ENCODE measurements at regions of chr7 and their contacts with region 1.

Region 1: GRCh38 chr7:132569884-132570614 is 6.2 kb downstream of the PLXNA4 start:
- DNase-seq: no peak
- ATAC-seq: no peak
- H3K4me3 ChIP-seq: no peak overlapping the region
- H3K27ac ChIP-seq: no peak overlapping the region
- H3K4me1 ChIP-seq: peaks cover 0 to 24% (median 2%) of the 10 kb centered on the region in 12 donors
- H3K27me3 ChIP-seq: peaks cover 0 to 43% (median 4%) of the 10 kb centered on the region in 9 donors
- CTCF ChIP-seq: no peak
- POLR2A ChIP-seq: no peak

Region 2: GRCh38 chr7:132500727-132501440 is 69.2 kb before region 1 on chr7:
- intact Hi-C with region 1: loop called in 3 of 10 experiments (anchors 5 to 10 kb)
- DNase-seq: peak in 4 of 5 donors; percentile 64 to 82 (median 73)
- ATAC-seq: peak; percentile 81 to 92 (median 85)
- H3K4me3 ChIP-seq: no peak overlapping the region
- H3K27ac ChIP-seq: peak overlapping the region in 3 of 12 donors; percentile 0 to 37 (median 34)
- H3K4me1 ChIP-seq: peaks cover 0 to 29% (median 6%) of the 10 kb centered on the region in 12 donors
- H3K27me3 ChIP-seq: no peaks in the 10 kb centered on the region
- CTCF ChIP-seq: peak; percentile 15 to 63 (median 50)
- POLR2A ChIP-seq: no peak

Region 3: GRCh38 chr7:132519548-132520335 is 50.3 kb before region 1 on chr7:
- intact Hi-C with region 1: no loop called
- DNase-seq: no peak
- ATAC-seq: peak in 3 of 4 donors; percentile 55 to 76 (median 66)
- H3K4me3 ChIP-seq: no peak overlapping the region
- H3K27ac ChIP-seq: no peak overlapping the region
- H3K4me1 ChIP-seq: peaks cover 0 to 32% (median 12%) of the 10 kb centered on the region in 12 donors
- H3K27me3 ChIP-seq: no peaks in the 10 kb centered on the region
- CTCF ChIP-seq: no peak
- POLR2A ChIP-seq: no peak

Region 4: GRCh38 chr7:132537456-132538341 is 32.4 kb before region 1 on chr7:
- intact Hi-C with region 1: no loop called
- DNase-seq: peak in 1 of 5 donors; percentile 35
- ATAC-seq: peak in 3 of 4 donors; percentile 40 to 59 (median 41)
- H3K4me3 ChIP-seq: no peak overlapping the region
- H3K27ac ChIP-seq: no peak overlapping the region
- H3K4me1 ChIP-seq: peaks cover 0 to 14% (median 0%) of the 10 kb centered on the region in 12 donors
- H3K27me3 ChIP-seq: no peaks in the 10 kb centered on the region
- CTCF ChIP-seq: no peak
- POLR2A ChIP-seq: no peak

Measured in heart left ventricle (tissue), 16 donors.